Ovary (tissue), 10 donors: ENCODE measurements at regions of chr11 and their contacts with region 1.

Region 1: GRCh38 chr11:94602430-94603372 is 35.5 kb downstream of the PIWIL4 start:
- DNase-seq: peak in 4 of 5 donors; percentile 36 to 60 (median 54)
- H3K4me3 ChIP-seq: no peak overlapping the region
- H3K27ac ChIP-seq: no peak overlapping the region
- H3K4me1 ChIP-seq: no peaks in the 10 kb centered on the region
- H3K27me3 ChIP-seq: no peaks in the 10 kb centered on the region
- CTCF ChIP-seq: peak in 1 of 3 donors; percentile 24
- EP300 ChIP-seq: no peak
- POLR2A ChIP-seq: no peak

Region 2: GRCh38 chr11:94060405-94060804 is 542.3 kb before region 1 on chr11:
- intact Hi-C with region 1: no loop called
- DNase-seq: no peak
- H3K4me3 ChIP-seq: no peak overlapping the region
- H3K27ac ChIP-seq: no peak overlapping the region
- H3K4me1 ChIP-seq: no peaks in the 10 kb centered on the region
- H3K27me3 ChIP-seq: no peaks in the 10 kb centered on the region
- CTCF ChIP-seq: no peak
- EP300 ChIP-seq: no peak
- POLR2A ChIP-seq: no peak

Region 3: GRCh38 chr11:94519478-94520084 is 83.1 kb before region 1 on chr11:
- intact Hi-C with region 1: loop called in 2 of 4 experiments (anchors 5 kb)
- DNase-seq: no peak
- H3K4me3 ChIP-seq: no peak overlapping the region
- H3K27ac ChIP-seq: no peak overlapping the region
- H3K4me1 ChIP-seq: no peaks in the 10 kb centered on the region
- H3K27me3 ChIP-seq: no peaks in the 10 kb centered on the region
- CTCF ChIP-seq: peak; percentile 27 to 61 (median 37)
- EP300 ChIP-seq: no peak
- POLR2A ChIP-seq: no peak

Region 4: GRCh38 chr11:94638902-94639373 is 36.2 kb after region 1 on chr11:
- intact Hi-C with region 1: no loop called
- DNase-seq: no peak
- H3K4me3 ChIP-seq: no peak overlapping the region
- H3K27ac ChIP-seq: no peak overlapping the region
- H3K4me1 ChIP-seq: no peaks in the 10 kb centered on the region
- H3K27me3 ChIP-seq: no peaks in the 10 kb centered on the region
- CTCF ChIP-seq: no peak
- EP300 ChIP-seq: no peak
- POLR2A ChIP-seq: no peak